ENCODE measurements at regions of chr4 and their contacts with region 1.

Region 1: GRCh38 chr4:150970685-150971151 is 44.4 kb downstream of the LRBA start:
- DNase-seq: no peak
- ATAC-seq: peak; percentile 88
- H3K4me3 Mint-ChIP-seq: no peak overlapping the region
- H3K27ac Mint-ChIP-seq: peak overlapping the region; percentile 51
- H3K4me1 Mint-ChIP-seq: peaks cover 47% of the 10 kb centered on the region
- H3K27me3 Mint-ChIP-seq: no peaks in the 10 kb centered on the region

Region 2: GRCh38 chr4:150943818-150944217 is 26.9 kb before region 1 on chr4:
- CTCF ChIA-PET with region 1: no interaction called
- POLR2A ChIA-PET with region 1: no interaction called
- intact Hi-C with region 1: loop called in 1 of 2 experiments (anchors 2 kb)
- DNase-seq: peak; percentile 50
- ATAC-seq: peak; percentile 85
- H3K4me3 Mint-ChIP-seq: no peak overlapping the region
- H3K27ac Mint-ChIP-seq: peak overlapping the region; percentile 13
- H3K4me1 Mint-ChIP-seq: peaks cover 61% of the 10 kb centered on the region
- H3K27me3 Mint-ChIP-seq: no peaks in the 10 kb centered on the region

Region 3: DNA sequence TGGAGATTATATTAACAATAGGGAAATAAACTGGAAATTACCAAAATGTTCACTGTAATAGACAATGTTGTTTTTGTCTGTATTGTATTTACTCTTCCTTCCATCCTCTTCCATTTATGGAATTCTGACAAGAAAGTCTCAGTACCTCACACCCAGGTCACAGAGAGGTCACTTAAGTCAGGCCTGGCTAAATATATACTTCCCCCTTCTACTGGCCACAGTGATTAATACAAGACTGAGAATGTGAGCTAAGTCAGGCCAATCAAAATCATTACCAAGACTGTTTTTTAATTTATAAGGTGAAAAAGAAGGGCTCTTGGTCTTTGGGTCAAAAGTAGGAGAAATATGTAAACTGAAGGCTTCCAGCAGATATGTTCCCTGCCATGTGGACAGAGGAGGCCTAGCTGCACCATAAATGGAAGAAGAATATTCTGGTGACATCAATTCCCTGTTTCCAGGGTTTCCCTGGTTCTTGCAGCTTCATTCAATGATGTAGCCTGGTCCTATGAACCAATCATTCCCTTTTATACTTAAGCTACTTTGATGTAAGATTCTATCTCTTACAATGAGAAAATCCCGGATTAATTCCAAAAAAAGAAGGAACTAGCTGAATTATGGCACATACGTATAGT is 19.9 kb before region 1 on chr4:
- CTCF ChIA-PET with region 1: interaction called, 4 read pairs
- POLR2A ChIA-PET with region 1: no interaction called
- intact Hi-C with region 1: loop called (anchors 1 to 2 kb)
- DNase-seq: no peak
- ATAC-seq: no peak
- H3K4me3 Mint-ChIP-seq: no peak overlapping the region
- H3K27ac Mint-ChIP-seq: no peak overlapping the region
- H3K4me1 Mint-ChIP-seq: peaks cover 51% of the 10 kb centered on the region
- H3K27me3 Mint-ChIP-seq: no peaks in the 10 kb centered on the region

Region 4: GRCh38 chr4:151015459-151016347 is 45.0 kb after region 1 on chr4:
- CTCF ChIA-PET with region 1: interaction called, 4 read pairs
- POLR2A ChIA-PET with region 1: no interaction called
- intact Hi-C with region 1: loop called (anchors 2 to 5 kb)
- DNase-seq: peak; percentile 89
- ATAC-seq: peak; percentile 81
- H3K4me3 Mint-ChIP-seq: peak overlapping the region; percentile 90
- H3K27ac Mint-ChIP-seq: peak overlapping the region; percentile 99
- H3K4me1 Mint-ChIP-seq: peaks cover 24% of the 10 kb centered on the region
- H3K27me3 Mint-ChIP-seq: no peaks in the 10 kb centered on the region